ENCODE measurements at regions of chr13 and their contacts with region 1.

Region 1: DNA sequence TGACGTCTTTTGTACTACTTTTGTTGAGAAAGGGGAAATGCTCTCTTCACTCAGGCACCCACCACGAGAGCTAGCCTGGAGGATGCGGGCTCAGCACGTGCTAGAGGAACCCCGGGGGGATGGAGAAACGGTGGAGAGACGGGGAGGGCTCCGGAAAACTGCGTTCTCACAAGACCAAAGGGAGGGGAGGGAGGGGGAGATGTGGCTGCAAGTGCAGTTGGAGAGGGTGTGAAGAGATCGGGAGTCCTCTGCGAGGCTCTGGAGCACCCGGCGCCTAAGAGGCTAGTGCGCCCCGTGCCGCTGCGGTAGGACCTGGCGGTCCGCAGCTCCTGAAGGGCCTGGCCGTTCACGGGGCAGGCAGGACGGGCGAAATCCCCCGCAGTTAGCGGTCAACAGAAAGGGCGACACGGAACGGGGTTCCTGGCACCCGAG is 43.4 kb upstream of the XPO4 start:
- DNase-seq: no peak
- H3K4me3 ChIP-seq: no peak overlapping the region
- H3K27ac ChIP-seq: no peak overlapping the region
- H3K4me1 ChIP-seq: no peaks in the 10 kb centered on the region
- H3K27me3 ChIP-seq: no peaks in the 10 kb centered on the region
- CTCF ChIP-seq: no peak
- EP300 ChIP-seq: no peak
- POLR2A ChIP-seq: no peak

Region 2: DNA sequence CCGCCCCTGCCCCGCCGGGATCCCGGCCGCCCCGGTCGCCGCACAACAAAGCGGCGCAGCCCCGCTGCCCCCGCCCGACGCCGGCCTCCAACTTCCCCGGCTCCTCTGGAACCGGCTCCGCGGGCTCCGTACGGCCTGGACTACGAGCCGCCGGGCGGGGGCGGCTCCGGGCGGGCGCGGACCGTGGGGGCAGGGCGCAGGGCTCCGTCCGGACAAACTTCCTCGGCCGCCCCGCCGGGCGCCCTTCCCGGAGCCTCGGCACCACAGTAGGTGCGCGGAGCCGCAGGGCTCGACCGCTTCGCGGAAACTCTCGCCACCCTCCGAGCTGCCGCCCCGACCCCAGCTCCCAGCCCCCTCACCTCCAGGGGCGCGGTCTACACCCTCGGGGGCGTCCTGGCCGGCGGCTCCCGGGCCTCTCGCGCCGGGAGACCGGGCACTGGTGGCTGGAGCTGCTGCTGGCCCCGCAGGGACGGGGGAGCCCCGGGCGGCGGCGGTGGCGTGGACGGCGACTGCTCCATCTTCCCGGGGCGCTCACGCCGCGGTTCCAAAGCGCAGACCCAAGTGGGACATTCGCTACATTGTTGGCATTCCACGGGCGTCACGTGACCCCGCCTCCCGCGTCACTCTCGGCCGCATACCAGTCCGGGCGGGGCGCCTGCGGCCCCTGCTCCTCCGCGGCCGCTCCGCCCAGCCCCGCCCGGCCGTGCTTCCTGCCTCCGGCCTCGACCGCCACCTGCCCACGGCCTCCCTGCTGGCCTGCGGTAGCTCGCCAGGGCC is 115.2 kb after region 1 on chr13 and contains the start of gene LATS2:
- intact Hi-C with region 1: loop called in 1 of 4 experiments (anchors 10 kb)
- DNase-seq: peak; percentile 96 to 99 (median 98)
- H3K4me3 ChIP-seq: peak within 1 kb of the TSS; percentile 85
- H3K27ac ChIP-seq: peak within 1 kb of the TSS; percentile 98 to 100
- H3K4me1 ChIP-seq: peaks cover 4% of the 10 kb centered on the region
- H3K27me3 ChIP-seq: no peaks in the 10 kb centered on the region
- CTCF ChIP-seq: no peak
- EP300 ChIP-seq: peak; percentile 13
- POLR2A ChIP-seq: peak; percentile 81
- total RNA-seq, gene LATS2: 17.2 to 41.9 (median 24.2) TPM

Region 3: GRCh38 chr13:21137696-21138095 is 191.7 kb after region 1 on chr13:
- intact Hi-C with region 1: loop called (anchors 5 to 10 kb)
- DNase-seq: peak in 1 of 5 donors; percentile 28
- H3K4me3 ChIP-seq: no peak overlapping the region
- H3K27ac ChIP-seq: no peak overlapping the region
- H3K4me1 ChIP-seq: peaks cover 10% of the 10 kb centered on the region
- H3K27me3 ChIP-seq: no peaks in the 10 kb centered on the region
- CTCF ChIP-seq: no peak
- EP300 ChIP-seq: no peak
- POLR2A ChIP-seq: no peak

Region 4: DNA sequence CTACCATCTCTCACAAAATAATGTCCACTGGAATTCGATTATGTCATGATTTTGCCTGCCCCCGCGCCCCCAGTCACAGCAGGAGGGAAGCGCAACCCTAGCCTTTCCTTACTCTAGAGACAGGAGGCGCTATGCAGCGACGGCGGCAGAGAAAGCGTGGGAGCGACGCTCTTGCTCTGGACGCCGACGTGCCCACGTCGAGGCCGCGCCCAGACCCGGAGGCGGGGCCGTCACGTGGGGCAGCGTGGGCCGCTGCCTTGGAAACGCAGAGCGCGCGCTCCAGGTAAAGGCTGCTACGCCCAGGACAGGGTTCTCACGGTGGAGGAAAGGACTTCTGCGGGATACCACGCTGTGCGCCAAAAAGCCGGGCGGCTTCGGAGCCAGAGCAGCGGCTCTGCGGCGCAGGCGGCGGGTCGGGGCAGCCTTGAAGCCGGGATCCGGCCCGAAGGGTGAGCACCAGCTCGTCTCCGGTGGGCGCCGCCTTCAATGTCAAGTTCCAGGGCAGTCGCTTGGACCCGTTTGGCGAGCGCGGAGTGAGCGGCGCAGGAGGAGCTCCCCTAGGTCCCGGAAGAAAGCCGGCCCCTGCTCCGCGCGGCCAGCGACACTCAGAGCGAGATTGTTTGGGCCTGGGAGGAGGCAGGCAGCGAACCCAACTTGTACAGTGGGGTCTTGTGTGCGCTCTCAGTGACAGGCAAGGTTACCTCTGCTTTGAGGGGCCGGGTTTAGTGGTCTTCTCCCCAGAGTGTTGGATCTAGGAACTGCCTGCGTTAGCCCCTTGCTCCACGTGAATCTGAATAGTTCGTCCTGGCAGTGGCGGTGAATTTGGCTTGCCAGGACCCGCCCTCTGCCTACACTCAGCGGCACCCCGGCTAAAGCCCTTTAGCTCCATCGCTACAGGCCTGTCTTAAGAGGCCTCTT is 352.2 kb after region 1 on chr13:
- intact Hi-C with region 1: loop called in 1 of 4 experiments (anchors 10 kb)
- DNase-seq: peak; percentile 78 to 89 (median 83)
- H3K4me3 ChIP-seq: peak overlapping the region; percentile 66
- H3K27ac ChIP-seq: peak overlapping the region; percentile 42 to 63
- H3K4me1 ChIP-seq: peaks cover 2% of the 10 kb centered on the region
- H3K27me3 ChIP-seq: no peaks in the 10 kb centered on the region
- CTCF ChIP-seq: peak; percentile 90 to 94 (median 92)
- EP300 ChIP-seq: no peak
- POLR2A ChIP-seq: no peak

Region 5: DNA sequence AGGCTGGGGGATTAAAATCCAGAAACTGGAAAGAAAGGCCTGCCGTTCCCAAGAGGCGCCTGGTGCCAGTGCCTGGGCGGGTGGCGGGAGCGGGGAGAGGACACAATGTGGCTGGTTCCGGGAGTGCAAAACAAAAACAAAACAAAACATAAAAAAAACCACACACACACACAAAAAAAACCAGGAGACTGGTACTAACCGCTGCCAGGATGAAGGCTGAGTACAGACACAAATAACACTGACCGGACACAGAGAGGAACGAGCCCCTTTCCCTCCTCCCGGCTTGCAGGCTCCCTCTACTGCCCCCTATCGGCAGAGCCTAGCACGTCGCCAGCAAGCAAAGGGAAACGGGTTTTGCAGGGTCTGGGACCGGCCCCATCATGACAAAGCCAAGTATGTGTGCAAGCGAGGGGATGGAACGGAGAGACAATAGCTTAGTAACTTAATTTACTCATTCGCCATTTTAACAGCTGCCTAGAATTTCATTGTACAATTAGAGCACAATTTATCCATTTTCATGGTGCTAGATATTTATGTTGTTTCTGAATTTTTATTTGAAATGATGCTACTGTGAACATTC is 531.0 kb after region 1 on chr13:
- intact Hi-C with region 1: loop called in 2 of 4 experiments (anchors 5 to 10 kb)
- DNase-seq: peak; percentile 56 to 79 (median 75)
- H3K4me3 ChIP-seq: peak overlapping the region; percentile 29
- H3K27ac ChIP-seq: no peak overlapping the region
- H3K4me1 ChIP-seq: peaks cover 2% of the 10 kb centered on the region
- H3K27me3 ChIP-seq: no peaks in the 10 kb centered on the region
- CTCF ChIP-seq: peak; percentile 56 to 71 (median 61)
- EP300 ChIP-seq: no peak
- POLR2A ChIP-seq: no peak